ENCODE measurements at regions of chr3 and their contacts with region 1.

Region 1: DNA sequence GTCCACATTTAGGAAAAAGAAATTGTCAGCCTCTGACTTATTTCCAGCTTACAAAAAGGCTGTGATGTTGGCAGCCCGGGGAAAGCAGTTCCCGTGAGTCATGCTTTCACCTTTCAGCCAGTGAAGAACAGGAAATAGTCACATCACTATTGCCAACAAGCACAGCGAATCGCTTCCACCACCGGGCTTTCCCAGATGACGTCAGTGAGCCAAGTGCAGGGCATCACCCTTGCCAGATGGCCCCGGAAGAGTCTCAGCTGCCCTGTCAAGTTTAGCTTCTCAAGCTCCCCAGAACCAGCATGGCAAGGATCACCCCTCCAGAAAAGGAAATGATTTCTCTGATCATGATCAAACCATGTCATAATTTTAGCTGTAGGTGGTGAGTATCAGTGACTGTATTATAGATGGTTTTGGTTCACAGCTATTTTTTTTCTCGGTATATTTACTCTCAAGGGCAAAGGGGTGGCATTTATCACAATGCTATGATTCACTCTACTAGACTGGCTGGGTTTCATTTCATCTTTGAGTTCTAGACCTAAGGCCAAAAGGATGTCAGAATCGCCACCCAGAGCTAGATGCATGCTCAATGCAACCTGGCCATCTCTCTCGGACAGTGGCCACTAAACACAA is 32.9 kb downstream of the B3GNT5 start:
- DNase-seq: peak; percentile 88
- H3K4me3 Mint-ChIP-seq: peak overlapping the region; percentile 57
- H3K27ac Mint-ChIP-seq: peak overlapping the region; percentile 95
- H3K4me1 Mint-ChIP-seq: peaks cover 35% of the 10 kb centered on the region
- H3K27me3 Mint-ChIP-seq: no peaks in the 10 kb centered on the region

Region 2: GRCh38 chr3:183224180-183224970 is 61.6 kb before region 1 on chr3:
- intact Hi-C with region 1: loop called (anchors 1 kb)
- DNase-seq: peak; percentile 52
- H3K4me3 Mint-ChIP-seq: peak overlapping the region; percentile 49
- H3K27ac Mint-ChIP-seq: peak overlapping the region; percentile 82
- H3K4me1 Mint-ChIP-seq: peaks cover 51% of the 10 kb centered on the region
- H3K27me3 Mint-ChIP-seq: no peaks in the 10 kb centered on the region

Region 3: GRCh38 chr3:183252973-183253901 is 32.7 kb before region 1 on chr3 and contains the start of gene B3GNT5:
- intact Hi-C with region 1: loop called (anchors 1 kb)
- DNase-seq: no peak
- H3K4me3 Mint-ChIP-seq: peak within 1 kb of the TSS; percentile 85
- H3K27ac Mint-ChIP-seq: peak within 1 kb of the TSS; percentile 76
- H3K4me1 Mint-ChIP-seq: peaks cover 23% of the 10 kb centered on the region
- H3K27me3 Mint-ChIP-seq: no peaks in the 10 kb centered on the region
- total RNA-seq, gene B3GNT5: 41.0 and 41.7 TPM in 2 replicates

Region 4: DNA sequence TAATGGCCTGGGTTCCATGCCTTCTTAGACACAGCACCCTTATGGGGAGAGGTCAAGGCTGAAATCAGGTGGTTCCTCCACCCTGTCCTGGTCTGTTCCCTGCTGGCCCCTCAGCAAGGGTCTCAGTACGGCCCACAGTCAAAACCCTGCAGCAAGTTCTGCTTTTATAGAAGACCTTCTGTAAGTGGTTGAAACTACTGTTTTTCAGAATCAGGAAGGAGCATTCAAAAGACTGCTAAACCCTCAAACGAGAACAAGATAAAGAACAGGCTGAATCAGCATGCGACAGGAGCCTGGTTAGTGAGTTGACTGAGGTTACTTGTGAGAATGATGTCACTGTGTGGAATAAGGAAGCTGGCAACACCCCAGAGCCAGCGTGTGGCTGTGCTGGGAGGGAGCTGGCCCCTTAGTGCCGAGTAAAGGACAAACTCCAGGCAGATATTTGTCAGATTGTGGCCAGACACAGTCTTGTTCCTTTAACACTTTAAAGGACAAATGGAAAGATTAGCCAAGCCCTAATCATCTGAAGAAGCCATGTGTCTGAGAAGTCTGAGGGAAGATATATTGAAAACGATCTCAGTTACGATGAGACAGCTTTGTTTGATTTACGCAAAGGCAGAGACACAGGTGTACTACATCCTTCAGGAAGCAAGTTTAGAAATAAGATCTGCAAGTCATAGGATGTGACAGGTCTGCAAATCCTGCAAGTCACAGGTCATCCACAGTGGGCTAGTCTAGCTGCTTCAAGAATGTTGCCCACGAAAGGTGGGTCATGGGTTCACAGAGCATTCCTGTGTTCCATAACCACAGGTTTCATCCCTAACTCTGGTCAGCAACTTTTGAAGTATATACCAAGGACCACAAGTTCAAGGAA is 21.1 kb after region 1 on chr3:
- intact Hi-C with region 1: loop called (anchors 1 kb)
- DNase-seq: peak; percentile 25
- H3K4me3 Mint-ChIP-seq: peak overlapping the region; percentile 2
- H3K27ac Mint-ChIP-seq: peak overlapping the region; percentile 81
- H3K4me1 Mint-ChIP-seq: peaks cover 29% of the 10 kb centered on the region
- H3K27me3 Mint-ChIP-seq: no peaks in the 10 kb centered on the region

Region 5: GRCh38 chr3:183349421-183350157 is 63.6 kb after region 1 on chr3:
- intact Hi-C with region 1: loop called (anchors 1 kb)
- DNase-seq: no peak
- H3K4me3 Mint-ChIP-seq: no peak overlapping the region
- H3K27ac Mint-ChIP-seq: peak overlapping the region; percentile 21
- H3K4me1 Mint-ChIP-seq: peaks cover 18% of the 10 kb centered on the region
- H3K27me3 Mint-ChIP-seq: peaks cover 13% of the 10 kb centered on the region

Region 6: GRCh38 chr3:183377307-183377959 is 91.5 kb after region 1 on chr3:
- intact Hi-C with region 1: loop called (anchors 2 kb)
- DNase-seq: no peak
- H3K4me3 Mint-ChIP-seq: no peak overlapping the region
- H3K27ac Mint-ChIP-seq: peak overlapping the region; percentile 25
- H3K4me1 Mint-ChIP-seq: peaks cover 38% of the 10 kb centered on the region
- H3K27me3 Mint-ChIP-seq: no peaks in the 10 kb centered on the region

Region 7: DNA sequence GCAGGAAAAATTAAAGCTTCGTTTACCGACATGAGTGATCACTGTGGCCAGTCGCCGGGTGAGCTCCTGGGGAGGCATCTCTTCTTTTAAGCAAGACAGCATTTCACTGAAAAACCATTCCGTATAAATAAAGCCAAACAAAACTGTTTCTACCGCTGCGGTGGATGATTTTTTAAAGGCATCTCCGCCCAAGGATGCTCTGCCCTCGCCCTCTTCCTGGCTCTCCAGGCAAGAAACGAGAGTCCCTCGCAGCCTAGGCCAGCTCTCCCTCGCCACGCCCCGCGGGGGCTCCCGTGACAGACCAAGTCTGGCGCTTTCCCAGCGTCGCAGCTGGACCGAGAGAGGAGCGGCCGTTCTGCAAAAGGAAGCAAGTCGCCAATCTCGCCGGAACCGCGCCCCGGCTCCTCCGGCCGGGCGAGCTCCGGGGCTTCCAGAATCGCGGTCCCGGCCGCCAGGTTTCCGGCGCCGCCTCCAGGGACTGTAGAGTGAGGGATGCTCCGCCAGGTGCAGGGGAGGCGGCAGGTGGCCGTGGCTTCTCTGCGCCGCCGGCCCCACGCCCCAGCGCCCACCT is 142.0 kb after region 1 on chr3:
- intact Hi-C with region 1: loop called (anchors 2 kb)
- DNase-seq: peak; percentile 24
- H3K4me3 Mint-ChIP-seq: peak overlapping the region; percentile 81
- H3K27ac Mint-ChIP-seq: peak overlapping the region; percentile 14
- H3K4me1 Mint-ChIP-seq: peaks cover 39% of the 10 kb centered on the region
- H3K27me3 Mint-ChIP-seq: peaks cover 8% of the 10 kb centered on the region